A549 (cell line): ENCODE measurements at regions of chr2 and their contacts with region 1.

Region 1: DNA sequence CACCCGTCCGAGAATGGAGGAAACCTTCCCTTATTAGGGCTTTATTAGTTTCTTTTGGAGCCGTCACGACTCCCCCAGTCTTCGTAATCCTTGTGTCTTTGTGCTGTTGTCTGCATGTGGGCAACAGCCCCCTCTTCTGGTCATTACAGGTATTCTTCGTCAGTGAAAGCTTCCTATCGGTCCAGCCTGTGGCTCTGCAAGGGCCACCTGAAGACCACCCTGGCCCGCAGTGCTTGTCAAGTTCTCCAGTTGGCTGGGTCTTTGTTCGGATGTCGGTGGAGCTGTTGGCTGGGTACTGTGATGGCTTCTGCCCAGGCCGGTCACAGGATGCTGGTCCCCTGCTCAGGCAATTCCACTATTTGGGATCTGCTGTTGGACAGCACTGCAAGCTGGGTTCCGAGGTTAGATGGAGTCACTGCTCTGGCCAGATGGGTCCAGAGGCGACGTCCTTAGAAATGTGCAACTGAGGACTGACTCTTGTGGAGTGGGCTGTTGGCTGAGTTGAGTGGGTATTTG is 19.2 kb downstream of the E2F6 start:
- DNase-seq: peak; percentile 58 to 73
- ATAC-seq: peak; percentile 87 to 88
- H3K4me3 ChIP-seq: no peak overlapping the region
- H3K27ac ChIP-seq: no peak overlapping the region
- H3K4me1 ChIP-seq: no peaks in the 10 kb centered on the region
- CTCF ChIP-seq: peak; percentile 95
- EP300 ChIP-seq: no peak
- POLR2A ChIP-seq: no peak
- RAD21 ChIP-seq: peak; percentile 89 to 91

Region 2: GRCh38 chr2:11203480-11203879 is 243.3 kb before region 1 on chr2:
- CTCF ChIA-PET with region 1: interaction called, 18 read pairs
- POLR2A ChIA-PET with region 1: no interaction called
- DNase-seq: peak; percentile 71
- ATAC-seq: peak; percentile 85 to 89
- H3K4me3 ChIP-seq: no peak overlapping the region
- H3K27ac ChIP-seq: 0 out of 6 replicates have a peak overlapping the region, but pooled peaks of 1 of the 2 experiments have one; percentile 3
- H3K4me1 ChIP-seq: peaks cover 28% of the 10 kb centered on the region
- CTCF ChIP-seq: no peak
- EP300 ChIP-seq: no peak; a peak in 1 of 5 replicates
- POLR2A ChIP-seq: no peak
- RAD21 ChIP-seq: no peak

Region 3: DNA sequence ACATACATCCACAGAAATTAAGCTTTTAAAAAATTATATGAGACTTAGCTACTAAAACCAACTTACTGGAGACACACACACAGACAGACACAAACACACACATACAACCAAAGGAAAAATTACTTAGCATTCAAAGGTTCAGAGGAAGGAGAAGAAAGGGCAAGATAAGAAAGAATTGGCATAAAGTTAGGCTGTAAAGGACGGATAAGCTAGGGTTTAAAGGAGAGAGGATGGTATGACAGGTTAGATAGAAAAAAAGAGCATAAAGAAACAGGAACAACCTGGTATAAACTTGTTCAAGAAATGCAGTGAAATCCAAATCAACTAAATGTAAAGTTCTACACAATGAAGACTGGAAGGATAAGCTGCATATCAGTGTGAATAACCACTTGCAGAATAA is 218.1 kb before region 1 on chr2:
- CTCF ChIA-PET with region 1: interaction called, 26 read pairs
- POLR2A ChIA-PET with region 1: no interaction called
- DNase-seq: no peak
- ATAC-seq: no peak
- H3K4me3 ChIP-seq: no peak overlapping the region
- H3K27ac ChIP-seq: no peak overlapping the region
- H3K4me1 ChIP-seq: no peaks in the 10 kb centered on the region
- CTCF ChIP-seq: no peak
- EP300 ChIP-seq: no peak
- POLR2A ChIP-seq: no peak
- RAD21 ChIP-seq: no peak

Region 4: GRCh38 chr2:11234309-11234708 is 212.5 kb before region 1 on chr2:
- CTCF ChIA-PET with region 1: interaction called, 26 read pairs
- POLR2A ChIA-PET with region 1: no interaction called
- DNase-seq: no peak
- ATAC-seq: peak in 1 of 2 experiments; percentile 73; a peak in 2 of 6 replicates
- H3K4me3 ChIP-seq: no peak overlapping the region
- H3K27ac ChIP-seq: no peak overlapping the region
- H3K4me1 ChIP-seq: peaks cover 26% of the 10 kb centered on the region; the same call in 2 of the 3 replicates
- CTCF ChIP-seq: peak; percentile 82
- EP300 ChIP-seq: no peak
- POLR2A ChIP-seq: no peak
- RAD21 ChIP-seq: peak; percentile 80 to 91

Region 5: GRCh38 chr2:11457935-11458334 is 11.1 kb after region 1 on chr2:
- CTCF ChIA-PET with region 1: interaction called, 64 read pairs
- POLR2A ChIA-PET with region 1: no interaction called
- DNase-seq: no peak
- ATAC-seq: no peak
- H3K4me3 ChIP-seq: no peak overlapping the region
- H3K27ac ChIP-seq: no peak overlapping the region
- H3K4me1 ChIP-seq: peaks cover 10% of the 10 kb centered on the region; the same call in 1 of the 3 replicates
- CTCF ChIP-seq: no peak
- EP300 ChIP-seq: no peak
- POLR2A ChIP-seq: no peak
- RAD21 ChIP-seq: no peak

Region 6: GRCh38 chr2:11515490-11515981 is 68.7 kb after region 1 on chr2:
- CTCF ChIA-PET with region 1: no interaction called
- POLR2A ChIA-PET with region 1: no interaction called
- DNase-seq: no peak
- ATAC-seq: no peak
- H3K4me3 ChIP-seq: no peak overlapping the region
- H3K27ac ChIP-seq: no peak overlapping the region
- H3K4me1 ChIP-seq: no peaks in the 10 kb centered on the region
- CTCF ChIP-seq: no peak
- EP300 ChIP-seq: no peak
- POLR2A ChIP-seq: no peak
- RAD21 ChIP-seq: no peak

Region 7: GRCh38 chr2:11764359-11764758 is 317.6 kb after region 1 on chr2:
- CTCF ChIA-PET with region 1: no interaction called
- POLR2A ChIA-PET with region 1: no interaction called
- DNase-seq: no peak
- ATAC-seq: no peak
- H3K4me3 ChIP-seq: no peak overlapping the region
- H3K27ac ChIP-seq: no peak overlapping the region
- H3K4me1 ChIP-seq: peaks cover 5% of the 10 kb centered on the region; the same call in 1 of the 3 replicates
- CTCF ChIP-seq: no peak
- EP300 ChIP-seq: no peak
- POLR2A ChIP-seq: no peak
- RAD21 ChIP-seq: no peak